ENCODE measurements at regions of chr17 and their contacts with region 1.

Region 1: DNA sequence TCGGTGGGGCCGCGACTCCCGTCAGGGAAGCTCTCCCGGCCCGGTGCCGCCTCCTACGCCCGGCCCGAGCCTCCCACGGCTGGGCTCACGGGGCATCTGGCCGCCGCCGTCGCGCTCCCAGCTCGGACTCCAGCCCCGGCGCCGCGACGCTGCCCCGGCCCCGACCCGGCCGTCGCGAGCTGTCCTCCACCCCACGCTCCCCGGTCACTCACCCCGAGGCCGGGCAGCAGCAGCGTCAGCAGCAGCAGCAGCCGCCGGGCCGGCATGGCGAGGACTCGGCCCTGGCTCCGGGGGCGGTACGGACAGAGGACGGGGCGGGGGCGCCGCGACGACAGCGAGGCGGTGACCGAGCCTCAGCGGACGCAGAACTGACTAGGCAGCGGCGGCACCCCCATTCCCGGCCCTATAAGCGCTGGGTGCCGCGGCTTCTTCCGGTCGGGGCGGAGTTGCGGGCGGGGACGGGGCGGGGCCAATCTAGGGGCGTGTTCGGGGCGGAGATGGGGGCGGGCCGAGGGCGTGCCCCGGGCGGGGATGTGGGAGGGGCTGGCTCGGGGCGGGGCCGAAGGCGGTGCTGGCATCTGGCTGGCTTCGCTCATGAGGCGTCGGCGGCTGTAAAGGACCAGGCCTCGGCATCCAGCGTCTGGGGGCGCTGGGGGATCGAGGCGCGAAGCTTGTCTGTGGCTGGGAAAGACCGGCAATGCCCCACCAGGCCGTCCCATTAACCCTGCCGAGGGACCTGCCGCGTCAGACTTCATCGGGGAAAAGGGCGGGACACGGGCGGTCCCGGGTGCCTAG is at the start of gene ERN1:
- DNase-seq: peak; percentile 94 to 99 (median 96)
- H3K4me3 ChIP-seq: peak within 1 kb of the TSS; percentile 71 to 86 (median 76)
- H3K27ac ChIP-seq: peak within 1 kb of the TSS; percentile 91 to 92
- H3K4me1 ChIP-seq: peaks cover 0 to 9% (median 0%) of the 10 kb centered on the region in 3 donors
- H3K27me3 ChIP-seq: no peaks in the 10 kb centered on the region
- CTCF ChIP-seq: no peak
- total RNA-seq, gene ERN1: 37.0 TPM

Region 2: GRCh38 chr17:63919311-63919723 is 210.6 kb before region 1 on chr17:
- intact Hi-C with region 1: loop called (anchors 10 kb)
- DNase-seq: peak in 4 of 5 donors; percentile 47 to 67 (median 56)
- H3K4me3 ChIP-seq: no peak overlapping the region
- H3K27ac ChIP-seq: no peak overlapping the region
- H3K4me1 ChIP-seq: no peaks in the 10 kb centered on the region
- H3K27me3 ChIP-seq: no peaks in the 10 kb centered on the region
- CTCF ChIP-seq: peak; percentile 93

Region 3: GRCh38 chr17:64025732-64026294 is 104.1 kb before region 1 on chr17:
- intact Hi-C with region 1: loop called (anchors 5 kb)
- DNase-seq: peak; percentile 71 to 92 (median 80)
- H3K4me3 ChIP-seq: peak overlapping the region in 2 of 3 donors; percentile 33 to 55
- H3K27ac ChIP-seq: peak overlapping the region in 1 of 2 donors; percentile 39
- H3K4me1 ChIP-seq: peaks cover 0 to 6% (median 0%) of the 10 kb centered on the region in 3 donors
- H3K27me3 ChIP-seq: no peaks in the 10 kb centered on the region
- CTCF ChIP-seq: peak; percentile 84

Region 4: DNA sequence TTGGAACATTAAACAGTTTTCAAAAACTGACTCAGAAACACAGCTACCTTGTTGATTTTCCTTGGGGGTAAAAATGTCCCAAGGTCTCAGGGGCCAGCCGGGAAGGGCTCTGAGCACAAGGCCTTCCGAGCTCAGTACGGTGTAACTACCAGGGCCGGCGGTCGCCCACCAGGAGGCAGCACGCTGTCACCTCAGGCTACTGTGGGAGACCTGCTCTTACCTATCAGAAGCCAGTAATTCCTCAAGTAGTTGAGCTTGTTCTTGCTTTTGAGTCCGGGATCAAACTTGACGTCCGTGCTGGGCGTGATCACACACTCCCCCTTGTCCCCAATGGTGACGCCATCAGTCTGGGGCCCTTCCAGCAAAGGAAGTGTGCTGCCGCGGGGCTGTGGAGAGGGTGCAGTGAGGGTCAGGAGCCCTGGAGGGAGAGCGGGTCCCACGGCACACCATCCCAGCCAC is 66.2 kb before region 1 on chr17:
- intact Hi-C with region 1: loop called (anchors 10 kb)
- DNase-seq: peak; percentile 68 to 84 (median 81)
- H3K4me3 ChIP-seq: no peak overlapping the region
- H3K27ac ChIP-seq: no peak overlapping the region
- H3K4me1 ChIP-seq: peaks cover 0 to 2% (median 0%) of the 10 kb centered on the region in 3 donors
- H3K27me3 ChIP-seq: no peaks in the 10 kb centered on the region
- CTCF ChIP-seq: peak; percentile 53